ENCODE measurements at regions of chr11 and their contacts with region 1.

Region 1: DNA sequence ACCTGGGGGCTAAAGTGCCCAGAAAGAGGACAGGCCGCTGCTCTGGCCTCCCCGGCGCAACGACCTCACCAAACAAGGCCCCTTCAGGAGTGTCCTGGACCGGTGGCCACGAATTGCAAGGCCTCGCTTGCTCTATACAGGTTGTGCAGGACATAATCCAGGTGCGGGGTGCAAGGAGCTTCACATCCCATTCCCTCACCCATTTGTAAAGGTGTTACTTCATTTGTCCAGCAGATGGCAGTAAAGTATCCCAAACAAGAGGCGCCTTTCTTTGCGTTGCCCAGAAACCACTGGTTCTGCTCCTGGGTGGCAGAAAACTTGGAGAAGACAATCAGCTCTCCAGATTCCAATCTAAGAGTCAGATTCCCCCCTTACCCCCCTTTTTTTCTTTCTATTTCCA is 35.9 kb upstream of the PRDM11 start:
- DNase-seq: peak; percentile 36
- ATAC-seq: peak; percentile 49
- H3K4me3 Mint-ChIP-seq: no peak overlapping the region
- H3K27ac Mint-ChIP-seq: no peak overlapping the region
- H3K4me1 Mint-ChIP-seq: no peaks in the 10 kb centered on the region
- H3K27me3 Mint-ChIP-seq: peaks cover 21% of the 10 kb centered on the region

Region 2: DNA sequence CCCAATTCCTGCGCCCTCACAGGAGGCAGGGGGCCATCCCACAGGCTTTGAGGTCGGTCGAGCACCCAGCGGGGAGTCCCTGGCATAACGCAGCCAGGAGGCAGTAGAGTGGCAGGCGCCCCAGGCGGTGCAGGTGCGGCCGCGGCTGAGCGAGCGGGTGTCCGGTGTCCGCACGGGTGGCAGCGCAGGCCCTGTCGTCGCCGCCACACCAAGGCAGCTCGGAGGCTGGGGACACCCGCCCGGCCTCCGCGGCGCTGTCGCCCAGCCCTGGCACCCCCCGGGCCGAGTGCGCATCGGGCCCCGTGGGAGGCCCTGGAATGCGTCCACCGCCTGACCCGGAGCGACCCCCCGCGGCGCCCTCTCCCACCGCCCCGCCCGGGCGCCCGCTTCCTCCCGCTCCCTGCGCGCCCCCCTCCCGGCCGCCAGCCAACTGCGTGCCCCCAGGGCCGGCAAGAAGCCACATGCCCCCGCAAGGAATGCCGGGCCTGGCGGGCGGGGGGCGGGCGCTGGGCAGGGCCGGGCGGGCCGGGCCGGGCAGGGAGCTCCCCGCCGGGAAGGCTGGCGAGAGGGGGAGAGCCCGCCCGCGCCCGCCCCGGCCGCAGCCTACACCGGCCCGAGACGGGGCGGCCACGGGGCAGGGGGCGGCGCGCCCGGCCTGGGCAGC is 69.7 kb after region 1 on chr11:
- CTCF ChIA-PET with region 1: no interaction called
- POLR2A ChIA-PET with region 1: no interaction called
- intact Hi-C with region 1: loop called in 1 of 2 experiments (anchors 5 kb)
- DNase-seq: peak; percentile 48
- ATAC-seq: peak; percentile 37
- H3K4me3 Mint-ChIP-seq: peak overlapping the region; percentile 60
- H3K27ac Mint-ChIP-seq: no peak overlapping the region
- H3K4me1 Mint-ChIP-seq: peaks cover 3% of the 10 kb centered on the region
- H3K27me3 Mint-ChIP-seq: peaks cover 22% of the 10 kb centered on the region

Region 3: DNA sequence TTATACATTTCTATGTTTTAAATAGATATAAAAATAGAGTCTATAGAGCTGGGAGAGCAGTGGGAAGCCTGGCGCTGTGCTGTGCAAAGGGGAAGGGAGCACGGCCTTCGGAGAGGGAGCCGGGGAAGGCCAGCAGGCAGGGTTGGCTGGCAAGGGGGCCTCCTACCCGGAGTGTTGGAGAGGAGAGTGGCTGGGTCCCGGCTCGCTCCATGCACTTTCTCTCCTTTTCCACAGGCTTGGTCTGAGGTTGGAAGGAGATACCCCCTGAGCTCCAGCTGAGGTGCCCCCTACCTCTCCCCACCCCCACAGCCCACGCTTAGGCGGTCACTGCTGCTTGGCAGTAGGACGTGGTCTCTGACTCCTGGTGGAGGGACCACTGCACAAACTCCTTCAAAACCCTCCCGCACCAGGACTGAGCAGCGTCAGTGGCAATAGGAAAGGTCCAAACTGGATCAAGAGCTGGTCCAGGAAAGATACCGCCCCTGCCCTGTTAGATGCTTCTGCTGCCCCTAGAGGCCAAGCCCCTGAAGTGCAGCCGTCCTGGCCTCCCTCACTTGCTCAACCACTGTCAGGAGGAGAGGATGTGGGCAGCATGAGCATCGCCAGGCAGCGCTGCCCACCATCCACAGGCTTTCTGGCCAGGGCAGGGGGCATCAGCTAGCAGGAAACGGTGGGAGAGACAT is 122.7 kb after region 1 on chr11:
- CTCF ChIA-PET with region 1: interaction called, 6 read pairs
- POLR2A ChIA-PET with region 1: no interaction called
- intact Hi-C with region 1: loop called in 1 of 2 experiments (anchors 1 kb)
- DNase-seq: peak; percentile 82
- ATAC-seq: peak; percentile 70
- H3K4me3 Mint-ChIP-seq: no peak overlapping the region
- H3K27ac Mint-ChIP-seq: no peak overlapping the region
- H3K4me1 Mint-ChIP-seq: no peaks in the 10 kb centered on the region
- H3K27me3 Mint-ChIP-seq: peaks cover 14% of the 10 kb centered on the region

Region 4: GRCh38 chr11:45289369-45289768 is 178.8 kb after region 1 on chr11:
- CTCF ChIA-PET with region 1: interaction called, 17 read pairs
- POLR2A ChIA-PET with region 1: no interaction called
- intact Hi-C with region 1: loop called (anchors 1 kb)
- DNase-seq: no peak
- ATAC-seq: no peak
- H3K4me3 Mint-ChIP-seq: no peak overlapping the region
- H3K27ac Mint-ChIP-seq: no peak overlapping the region
- H3K4me1 Mint-ChIP-seq: no peaks in the 10 kb centered on the region
- H3K27me3 Mint-ChIP-seq: peaks cover 59% of the 10 kb centered on the region

Region 5: GRCh38 chr11:45294499-45294898 is 183.9 kb after region 1 on chr11:
- CTCF ChIA-PET with region 1: interaction called, 17 read pairs
- POLR2A ChIA-PET with region 1: no interaction called
- intact Hi-C with region 1: loop called (anchors 1 kb)
- DNase-seq: no peak
- ATAC-seq: no peak
- H3K4me3 Mint-ChIP-seq: no peak overlapping the region
- H3K27ac Mint-ChIP-seq: no peak overlapping the region
- H3K4me1 Mint-ChIP-seq: no peaks in the 10 kb centered on the region
- H3K27me3 Mint-ChIP-seq: peaks cover 25% of the 10 kb centered on the region

Region 6: DNA sequence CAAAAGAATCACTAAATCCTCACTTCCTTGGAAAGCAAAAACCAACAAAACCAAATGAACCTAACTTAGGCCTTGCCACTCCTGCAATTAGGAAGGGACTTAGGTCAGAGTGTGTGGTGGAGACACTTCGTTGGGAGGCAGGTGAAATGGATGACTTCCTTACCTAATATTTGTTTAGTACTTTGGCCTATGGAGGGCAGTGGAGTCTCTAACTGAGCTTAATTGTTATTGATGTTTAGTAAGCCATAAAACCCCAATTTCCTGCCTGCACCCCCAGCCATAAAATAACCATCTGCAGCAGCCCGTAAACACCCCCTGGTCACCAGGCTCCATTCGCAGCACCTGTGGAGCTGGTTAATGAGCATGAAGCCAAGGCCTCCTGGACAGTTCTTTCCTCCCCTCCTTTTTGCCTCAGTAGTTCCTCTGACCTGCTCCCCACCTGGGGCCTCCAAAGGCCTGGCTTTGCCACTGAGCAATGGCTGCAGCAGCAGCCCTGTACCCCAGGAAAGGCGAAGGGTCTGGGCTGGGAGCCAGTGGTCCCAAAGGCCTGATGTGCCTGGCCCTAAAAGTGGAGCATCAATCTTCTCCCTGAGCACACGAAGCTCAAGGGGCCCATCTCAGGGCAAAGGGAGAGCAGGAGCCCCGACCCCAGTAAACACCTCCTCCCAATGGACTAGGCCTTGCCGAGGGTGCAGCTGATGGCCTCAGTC is 191.1 kb after region 1 on chr11:
- CTCF ChIA-PET with region 1: interaction called, 13 read pairs
- POLR2A ChIA-PET with region 1: no interaction called
- intact Hi-C with region 1: no loop called
- DNase-seq: no peak
- ATAC-seq: no peak
- H3K4me3 Mint-ChIP-seq: no peak overlapping the region
- H3K27ac Mint-ChIP-seq: no peak overlapping the region
- H3K4me1 Mint-ChIP-seq: no peaks in the 10 kb centered on the region
- H3K27me3 Mint-ChIP-seq: peaks cover 6% of the 10 kb centered on the region

Region 7: DNA sequence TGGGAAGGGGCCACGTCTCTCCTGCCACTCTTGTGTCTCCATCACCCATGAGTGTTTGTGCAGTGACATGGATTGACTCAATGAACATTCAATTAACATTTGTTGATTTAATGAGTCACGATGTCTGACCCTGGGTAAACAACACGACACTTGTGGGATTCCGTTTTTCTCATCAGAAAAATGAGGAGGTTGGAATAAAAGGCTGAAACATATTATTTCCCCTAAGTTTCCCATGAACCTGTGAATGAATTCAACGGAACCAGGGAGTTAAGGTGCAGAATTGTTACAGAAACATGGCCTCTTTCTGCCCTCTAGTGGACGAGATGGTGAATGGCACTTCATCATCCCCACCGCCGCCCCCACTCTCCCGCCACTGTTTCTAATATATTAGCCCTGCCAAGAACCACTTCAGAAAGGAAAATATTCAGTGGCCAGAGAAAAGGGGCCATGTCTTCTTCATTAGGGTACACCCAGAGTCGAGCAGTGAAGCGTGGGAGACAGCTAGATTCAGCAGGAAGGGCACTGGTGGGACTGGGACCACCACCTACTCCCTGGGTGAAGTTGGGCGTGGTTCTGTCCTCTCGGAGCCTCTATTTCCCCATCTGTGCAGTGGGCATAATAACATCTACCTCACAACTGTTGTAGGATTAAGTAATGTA is 221.8 kb after region 1 on chr11:
- CTCF ChIA-PET with region 1: interaction called, 35 read pairs
- POLR2A ChIA-PET with region 1: no interaction called
- intact Hi-C with region 1: loop called (anchors 1 kb)
- DNase-seq: peak; percentile 51
- ATAC-seq: peak; percentile 57
- H3K4me3 Mint-ChIP-seq: no peak overlapping the region
- H3K27ac Mint-ChIP-seq: no peak overlapping the region
- H3K4me1 Mint-ChIP-seq: no peaks in the 10 kb centered on the region
- H3K27me3 Mint-ChIP-seq: peaks cover 8% of the 10 kb centered on the region

Measured in activated CD4-positive, alpha-beta T cell treated with anti-CD3 and anti-CD28 coated beads for 36 hours (primary cell).